Upper lobe of right lung (tissue), 1 donor: ENCODE measurements at regions of chr1 and their contacts with region 1.

Region 1: GRCh38 chr1:26321315-26322041 is 3.7 kb downstream of the CD52 start:
- DNase-seq: peak; percentile 93
- ATAC-seq: peak; percentile 92
- H3K4me3 ChIP-seq: no peak overlapping the region
- H3K27ac ChIP-seq: no peak overlapping the region
- H3K4me1 ChIP-seq: peaks cover 9% of the 10 kb centered on the region
- H3K27me3 ChIP-seq: no peaks in the 10 kb centered on the region
- CTCF ChIP-seq: peak; percentile 89

Region 2: GRCh38 chr1:26279456-26280332 is 41.8 kb before region 1 on chr1 and contains the start of gene SH3BGRL3:
- intact Hi-C with region 1: loop called (anchors 5 kb)
- DNase-seq: peak; percentile 95
- ATAC-seq: peak; percentile 86
- H3K4me3 ChIP-seq: peak within 1 kb of the TSS; percentile 99
- H3K27ac ChIP-seq: peak within 1 kb of the TSS; percentile 89
- H3K4me1 ChIP-seq: peaks cover 65% of the 10 kb centered on the region
- H3K27me3 ChIP-seq: no peaks in the 10 kb centered on the region
- CTCF ChIP-seq: peak; percentile 42
- total RNA-seq, gene SH3BGRL3: 169 TPM